HepG2 (cell line): ENCODE measurements at regions of chr2 and their contacts with region 1.

Region 1: DNA sequence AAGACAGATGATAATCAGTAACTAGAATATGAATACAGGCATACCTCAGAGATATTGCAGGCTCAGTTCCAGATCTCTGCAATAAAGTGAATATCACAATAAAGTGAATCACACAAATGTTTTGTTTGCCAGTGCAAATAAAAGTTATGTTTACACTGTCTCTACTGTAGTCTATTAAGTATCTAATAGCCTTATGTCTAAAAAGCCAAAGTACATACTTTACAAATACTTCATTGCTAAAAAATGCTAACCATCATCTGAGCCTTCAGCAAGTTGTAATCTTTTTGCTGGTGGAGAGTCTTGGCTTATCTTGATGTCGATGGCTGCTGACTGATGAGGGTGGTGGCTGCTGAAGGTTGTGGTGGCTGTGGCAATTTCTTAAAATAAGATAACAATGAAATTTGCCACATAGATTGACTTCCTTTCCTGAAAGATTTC is 159.4 kb downstream of the MYO1B start:
- DNase-seq: no peak
- ATAC-seq: no peak
- H3K4me3 ChIP-seq: no peak overlapping the region
- H3K27ac ChIP-seq: no peak overlapping the region
- H3K4me1 ChIP-seq: no peaks in the 10 kb centered on the region
- H3K27me3 ChIP-seq: no peaks in the 10 kb centered on the region
- CTCF ChIP-seq: no peak
- EP300 ChIP-seq: no peak
- POLR2A ChIP-seq: no peak
- RAD21 ChIP-seq: no peak

Region 2: DNA sequence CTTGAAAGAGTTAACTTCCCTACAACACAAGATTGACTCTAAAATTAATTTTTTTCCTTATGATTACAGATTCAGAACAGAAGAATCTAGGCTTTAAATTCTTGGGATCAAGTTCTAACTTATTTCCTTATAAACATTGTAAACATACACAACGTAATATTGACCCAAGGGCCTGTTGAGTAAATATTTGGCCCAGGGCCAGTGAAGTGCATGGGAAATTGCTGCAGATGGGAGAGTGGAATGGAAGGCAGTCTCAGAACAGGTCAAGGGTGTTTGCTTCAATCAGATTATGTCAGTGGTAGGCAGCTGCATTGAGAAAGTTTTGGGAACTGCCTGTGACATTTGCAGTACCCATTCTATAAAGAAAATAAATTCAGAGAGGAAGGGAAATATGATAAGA is 21.8 kb before region 1 on chr2:
- CTCF ChIA-PET with region 1: no interaction called
- POLR2A ChIA-PET with region 1: no interaction called
- in situ Hi-C with region 1: no loop called
- intact Hi-C with region 1: loop called (anchors 1 kb)
- DNase-seq: peak; percentile 87
- ATAC-seq: peak; percentile 83
- H3K4me3 ChIP-seq: no peak overlapping the region
- H3K27ac ChIP-seq: peak overlapping the region; percentile 42
- H3K4me1 ChIP-seq: peaks cover 43% of the 10 kb centered on the region
- H3K27me3 ChIP-seq: no peaks in the 10 kb centered on the region
- CTCF ChIP-seq: no peak
- EP300 ChIP-seq: peak in 1 of 2 experiments; percentile 83; a peak in 2 of 4 replicates
- POLR2A ChIP-seq: no peak
- RAD21 ChIP-seq: no peak